CD8-positive, alpha-beta T cell (primary cell): ENCODE measurements at regions of chr18 and their contacts with region 1.

Region 1: DNA sequence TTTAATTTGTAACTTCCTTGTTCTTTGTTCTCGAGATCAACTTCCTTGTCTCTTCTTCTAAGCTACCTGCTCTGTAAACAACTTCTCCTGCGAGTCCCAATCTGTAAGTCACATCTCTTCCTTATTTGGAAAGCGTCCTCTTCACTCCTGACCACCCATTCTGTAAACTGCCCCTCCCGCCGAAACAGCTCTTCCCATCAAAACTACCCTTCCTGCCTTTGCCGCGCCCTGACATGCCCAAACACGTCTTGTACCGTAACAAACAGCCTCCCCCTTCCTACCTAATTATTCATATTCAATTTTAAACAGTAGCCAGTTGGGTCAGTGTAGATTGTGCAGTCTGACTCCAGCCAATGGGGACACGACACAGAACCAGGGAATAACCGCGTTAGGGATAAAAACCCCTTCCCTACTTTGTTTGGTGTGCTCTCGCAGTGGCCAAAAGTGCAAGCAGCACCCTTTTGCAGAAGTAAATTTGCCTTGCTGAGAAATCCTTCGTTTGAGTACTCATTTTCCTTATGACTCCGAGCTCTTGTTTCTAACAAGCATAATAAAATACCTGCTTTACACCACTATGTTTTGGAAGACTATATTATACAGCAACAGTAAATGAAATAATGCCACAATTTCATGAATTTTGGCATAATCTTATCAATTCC is 39.8 kb downstream of the PIAS2 start:
- DNase-seq: no peak
- ATAC-seq: no peak
- H3K4me3 ChIP-seq: no peak overlapping the region
- H3K4me3 Mint-ChIP-seq: no peak overlapping the region
- H3K27ac ChIP-seq: no peak overlapping the region
- H3K27ac Mint-ChIP-seq: peak overlapping the region; percentile 78
- H3K4me1 ChIP-seq: peaks cover 6% of the 10 kb centered on the region
- H3K4me1 Mint-ChIP-seq: peaks cover 35% of the 10 kb centered on the region
- H3K27me3 ChIP-seq: no peaks in the 10 kb centered on the region
- H3K27me3 Mint-ChIP-seq: no peaks in the 10 kb centered on the region
- CTCF ChIP-seq: no peak

Region 2: DNA sequence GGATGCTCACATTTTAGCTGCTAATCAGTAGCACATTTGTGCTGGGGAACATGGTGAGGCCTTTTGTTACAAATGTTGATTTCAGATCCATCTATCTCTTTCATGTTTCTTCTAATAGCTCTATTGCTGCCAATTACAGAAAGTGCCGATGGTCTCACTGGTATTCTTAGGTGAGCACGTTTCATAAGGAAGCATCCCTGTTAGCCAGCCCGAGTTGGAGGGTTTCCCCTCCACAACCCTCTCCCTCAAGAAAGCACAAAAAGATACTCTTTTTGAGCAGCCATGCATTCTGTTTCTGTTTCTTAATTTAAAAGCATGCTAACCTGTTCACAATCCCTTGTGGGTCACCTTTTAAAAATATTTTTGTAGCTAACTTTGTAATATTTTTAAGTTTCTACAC is 89.8 kb before region 1 on chr18:
- CTCF ChIA-PET with region 1: no interaction called
- POLR2A ChIA-PET with region 1: no interaction called
- intact Hi-C with region 1: no loop called
- DNase-seq: no peak
- ATAC-seq: no peak
- H3K4me3 ChIP-seq: no peak overlapping the region
- H3K4me3 Mint-ChIP-seq: no peak overlapping the region
- H3K27ac ChIP-seq: no peak overlapping the region
- H3K27ac Mint-ChIP-seq: no peak overlapping the region
- H3K4me1 ChIP-seq: no peaks in the 10 kb centered on the region
- H3K4me1 Mint-ChIP-seq: no peaks in the 10 kb centered on the region
- H3K27me3 ChIP-seq: no peaks in the 10 kb centered on the region
- H3K27me3 Mint-ChIP-seq: peaks cover 3% of the 10 kb centered on the region
- CTCF ChIP-seq: no peak

Region 3: GRCh38 chr18:46891742-46892214 is 14.3 kb after region 1 on chr18:
- CTCF ChIA-PET with region 1: no interaction called
- POLR2A ChIA-PET with region 1: no interaction called
- intact Hi-C with region 1: loop called in 1 of 2 experiments (anchors 2 kb)
- DNase-seq: no peak
- ATAC-seq: no peak
- H3K4me3 ChIP-seq: no peak overlapping the region
- H3K4me3 Mint-ChIP-seq: no peak overlapping the region
- H3K27ac ChIP-seq: no peak overlapping the region
- H3K27ac Mint-ChIP-seq: no peak overlapping the region
- H3K4me1 ChIP-seq: peaks cover 10% of the 10 kb centered on the region
- H3K4me1 Mint-ChIP-seq: peaks cover 47% of the 10 kb centered on the region
- H3K27me3 ChIP-seq: no peaks in the 10 kb centered on the region
- H3K27me3 Mint-ChIP-seq: no peaks in the 10 kb centered on the region
- CTCF ChIP-seq: no peak

Region 4: DNA sequence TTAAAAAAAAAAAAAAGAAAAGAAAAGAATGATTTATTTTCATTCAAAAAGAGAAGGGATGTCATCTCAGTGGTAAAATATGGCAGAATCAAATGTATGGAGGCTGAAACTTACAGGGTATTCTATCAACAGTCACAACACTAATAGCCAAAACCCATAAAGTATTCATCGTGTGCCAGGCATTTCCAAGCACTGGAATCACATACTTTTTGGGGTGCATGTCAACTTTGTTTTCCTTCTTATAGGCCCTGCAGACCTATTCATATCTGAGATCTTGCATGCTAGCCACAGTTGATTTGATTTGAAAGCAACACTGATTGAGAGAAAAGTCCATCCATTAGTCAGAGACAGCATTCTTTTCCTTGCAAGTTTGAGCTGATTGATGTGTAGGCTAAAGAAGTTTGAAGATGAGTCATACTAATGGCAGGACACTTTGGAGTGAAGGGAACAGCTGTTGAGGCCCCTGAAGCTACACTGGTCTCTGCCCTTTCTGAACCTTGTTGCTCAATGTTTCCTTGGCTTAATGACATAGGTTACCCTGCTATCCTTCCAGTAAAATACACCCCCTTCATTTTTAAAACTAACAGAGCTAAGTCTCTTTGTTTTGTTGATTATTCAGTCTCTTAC is 62.0 kb after region 1 on chr18:
- CTCF ChIA-PET with region 1: no interaction called
- POLR2A ChIA-PET with region 1: no interaction called
- intact Hi-C with region 1: no loop called
- DNase-seq: no peak
- ATAC-seq: no peak
- H3K4me3 ChIP-seq: no peak overlapping the region
- H3K4me3 Mint-ChIP-seq: no peak overlapping the region
- H3K27ac ChIP-seq: no peak overlapping the region
- H3K27ac Mint-ChIP-seq: no peak overlapping the region
- H3K4me1 ChIP-seq: no peaks in the 10 kb centered on the region
- H3K4me1 Mint-ChIP-seq: no peaks in the 10 kb centered on the region
- H3K27me3 ChIP-seq: no peaks in the 10 kb centered on the region
- H3K27me3 Mint-ChIP-seq: no peaks in the 10 kb centered on the region
- CTCF ChIP-seq: no peak

Region 5: DNA sequence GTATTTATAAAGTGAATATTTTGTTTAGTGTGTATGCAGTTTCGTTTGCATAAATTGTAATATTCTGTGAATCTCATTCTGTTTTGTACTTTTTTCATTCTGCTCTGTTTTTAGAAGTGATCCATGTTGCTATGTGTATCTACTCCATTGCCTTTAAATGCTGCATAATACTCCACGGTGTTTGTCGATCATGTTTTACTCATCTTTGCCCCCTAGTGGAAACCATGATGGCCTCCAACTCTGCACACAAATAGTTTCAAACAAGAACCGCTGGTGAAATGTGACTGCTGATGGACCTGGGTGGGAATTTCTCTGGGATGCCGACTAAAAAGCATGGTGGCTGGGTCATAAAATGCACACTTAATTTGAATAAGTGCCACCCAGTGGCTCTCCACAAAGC is 406.0 kb after region 1 on chr18:
- CTCF ChIA-PET with region 1: no interaction called
- POLR2A ChIA-PET with region 1: no interaction called
- intact Hi-C with region 1: no loop called
- DNase-seq: peak in 1 of 9 experiments; percentile 3
- ATAC-seq: no peak
- H3K4me3 ChIP-seq: no peak overlapping the region
- H3K4me3 Mint-ChIP-seq: no peak overlapping the region
- H3K27ac ChIP-seq: no peak overlapping the region
- H3K27ac Mint-ChIP-seq: no peak overlapping the region
- H3K4me1 ChIP-seq: no peaks in the 10 kb centered on the region
- H3K4me1 Mint-ChIP-seq: no peaks in the 10 kb centered on the region
- H3K27me3 ChIP-seq: no peaks in the 10 kb centered on the region
- H3K27me3 Mint-ChIP-seq: peaks cover 14% of the 10 kb centered on the region
- CTCF ChIP-seq: no peak